AG04449 (cell line): ENCODE measurements at regions of chr4 and their contacts with region 1.

Region 1: DNA sequence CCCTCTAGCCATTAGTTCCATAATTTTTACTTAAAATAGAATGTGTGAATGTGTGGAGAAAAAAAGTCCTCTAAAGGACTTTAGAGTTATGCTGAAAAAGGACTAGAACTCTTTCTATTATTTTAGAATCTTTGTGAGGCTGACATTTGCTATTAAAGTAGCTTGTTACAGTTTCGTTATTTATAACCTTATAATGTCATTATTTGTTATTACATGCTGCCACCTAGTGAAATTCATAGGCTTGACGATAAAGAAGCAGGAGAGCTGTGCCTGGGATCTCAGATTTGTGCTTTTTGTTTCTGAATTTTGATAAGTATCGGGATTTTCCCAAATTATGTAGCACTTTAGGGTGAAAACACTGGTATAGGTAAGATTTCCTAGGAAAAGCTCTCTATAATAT is 38.5 kb upstream of the TAPT1 start:
- DNase-seq: no peak
- H3K4me3 ChIP-seq: no peak overlapping the region
- CTCF ChIP-seq: peak; percentile 32

Region 2: DNA sequence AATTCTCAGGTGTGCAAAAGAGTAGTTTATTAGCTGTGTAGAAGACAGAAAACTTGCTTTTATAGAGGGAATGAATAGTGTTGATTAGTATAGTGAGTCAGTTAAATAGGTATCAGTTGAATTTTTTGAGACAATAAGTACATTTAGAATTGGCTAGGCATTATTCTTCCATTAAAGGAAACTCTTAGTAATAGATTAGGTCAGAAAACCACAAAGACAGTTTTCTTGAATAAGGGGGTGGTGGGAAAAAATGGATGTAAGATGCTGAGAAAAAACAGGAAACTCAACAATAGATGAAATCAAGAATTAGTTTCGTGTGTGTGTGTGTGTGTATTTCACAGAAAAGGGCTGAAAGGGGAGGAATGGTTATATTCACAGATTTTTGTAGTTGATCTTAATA is 469.9 kb before region 1 on chr4:
- CTCF ChIA-PET with region 1: no interaction called
- POLR2A ChIA-PET with region 1: no interaction called
- DNase-seq: no peak
- H3K4me3 ChIP-seq: no peak overlapping the region
- CTCF ChIP-seq: no peak

Region 3: GRCh38 chr4:15963001-15963451 is 301.8 kb before region 1 on chr4 and contains the start of gene FGFBP2:
- CTCF ChIA-PET with region 1: interaction called, 63 read pairs
- POLR2A ChIA-PET with region 1: no interaction called
- DNase-seq: peak; percentile 5
- H3K4me3 ChIP-seq: no peak within 1 kb of the TSS
- CTCF ChIP-seq: peak; percentile 79

Region 4: DNA sequence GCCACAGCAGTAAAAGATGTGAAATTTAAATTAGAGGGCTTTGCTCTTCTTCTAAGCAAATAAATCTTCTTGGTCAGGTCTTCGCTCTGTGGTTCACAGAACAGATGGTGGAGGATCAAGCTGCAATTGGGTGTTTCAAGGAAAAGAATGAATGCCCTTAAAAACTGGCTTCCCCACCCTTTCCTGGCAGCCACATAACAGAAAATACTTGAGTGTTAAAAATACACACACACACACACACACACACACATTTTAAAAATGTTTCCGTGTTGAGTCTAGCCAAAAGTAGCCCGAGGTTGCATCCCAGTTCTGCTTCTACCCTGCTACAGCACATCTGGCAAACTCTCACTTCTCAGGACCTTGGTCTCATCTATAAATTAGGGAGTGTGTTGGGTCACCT is 245.1 kb before region 1 on chr4:
- CTCF ChIA-PET with region 1: interaction called, 15 read pairs
- POLR2A ChIA-PET with region 1: no interaction called
- DNase-seq: peak; percentile 28
- H3K4me3 ChIP-seq: no peak overlapping the region
- CTCF ChIP-seq: no peak

Region 5: DNA sequence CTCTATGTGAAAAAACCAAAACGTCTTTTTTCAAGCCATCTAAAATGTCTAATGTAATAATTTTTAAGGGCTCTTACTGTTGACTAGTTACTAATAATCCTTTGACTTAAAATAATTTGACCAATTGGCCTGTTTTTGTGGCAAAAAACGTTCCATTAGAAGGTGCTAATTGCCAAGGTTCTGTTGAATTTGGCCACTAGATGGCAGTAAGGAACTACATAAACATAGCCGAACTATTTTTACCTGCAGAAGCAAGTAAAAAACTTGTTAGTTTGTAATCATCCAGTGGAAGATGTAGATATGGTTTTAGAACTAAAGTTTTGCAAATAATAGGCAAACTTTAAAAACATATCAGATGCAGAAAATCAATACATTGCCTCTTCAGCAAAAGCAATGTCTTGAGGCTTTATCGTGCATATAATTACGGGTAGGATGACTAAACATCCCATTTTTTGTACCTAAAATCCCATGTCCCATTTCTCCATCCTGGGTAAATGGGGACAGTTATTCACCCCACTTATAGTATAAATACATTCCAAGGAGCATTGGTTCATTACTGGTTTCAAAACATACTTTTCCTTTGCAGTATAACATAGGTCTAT is 238.5 kb before region 1 on chr4:
- CTCF ChIA-PET with region 1: interaction called, 122 read pairs
- POLR2A ChIA-PET with region 1: no interaction called
- DNase-seq: no peak
- H3K4me3 ChIP-seq: no peak overlapping the region
- CTCF ChIP-seq: peak; percentile 43

Region 6: GRCh38 chr4:16196478-16197393 is 68.1 kb before region 1 on chr4:
- CTCF ChIA-PET with region 1: interaction called, 69 read pairs
- POLR2A ChIA-PET with region 1: no interaction called
- DNase-seq: no peak
- H3K4me3 ChIP-seq: no peak overlapping the region
- CTCF ChIP-seq: peak; percentile 29

Region 7: GRCh38 chr4:16205298-16206164 is 59.3 kb before region 1 on chr4:
- CTCF ChIA-PET with region 1: interaction called, 31 read pairs
- POLR2A ChIA-PET with region 1: no interaction called
- DNase-seq: no peak
- H3K4me3 ChIP-seq: no peak overlapping the region
- CTCF ChIP-seq: peak; percentile 52